Gastrocnemius medialis (tissue), 4 donors: ENCODE measurements at regions of chr17 and their contacts with region 1.

Region 1: GRCh38 chr17:48878918-48879898 is 13.4 kb upstream of the ATP5MC1 start:
- DNase-seq: peak in 1 of 2 donors; percentile 38
- ATAC-seq: peak; percentile 76 to 85
- H3K4me3 ChIP-seq: no peak overlapping the region
- H3K27ac ChIP-seq: no peak overlapping the region
- H3K4me1 ChIP-seq: peaks cover 0 to 3% of the 10 kb centered on the region in 2 donors
- H3K27me3 ChIP-seq: no peaks in the 10 kb centered on the region
- CTCF ChIP-seq: peak; percentile 77 to 91 (median 87)
- POLR2A ChIP-seq: no peak

Region 2: GRCh38 chr17:47941236-47941994 is 937.8 kb before region 1 on chr17 and contains the start of gene PNPO:
- in situ Hi-C with region 1: no loop called
- intact Hi-C with region 1: no loop called
- DNase-seq: peak; percentile 95 to 97
- ATAC-seq: peak; percentile 100
- H3K4me3 ChIP-seq: peak within 1 kb of the TSS; percentile 77 to 99 (median 88)
- H3K27ac ChIP-seq: peak within 1 kb of the TSS; percentile 88 to 98 (median 92)
- H3K4me1 ChIP-seq: peaks cover 13 to 20% of the 10 kb centered on the region in 2 donors
- H3K27me3 ChIP-seq: no peaks in the 10 kb centered on the region
- CTCF ChIP-seq: peak in 2 of 5 experiments; percentile 23 to 24
- POLR2A ChIP-seq: peak; percentile 55 to 71
- total RNA-seq, gene PNPO: 27.9 to 64.0 (median 41.5) TPM

Region 3: DNA sequence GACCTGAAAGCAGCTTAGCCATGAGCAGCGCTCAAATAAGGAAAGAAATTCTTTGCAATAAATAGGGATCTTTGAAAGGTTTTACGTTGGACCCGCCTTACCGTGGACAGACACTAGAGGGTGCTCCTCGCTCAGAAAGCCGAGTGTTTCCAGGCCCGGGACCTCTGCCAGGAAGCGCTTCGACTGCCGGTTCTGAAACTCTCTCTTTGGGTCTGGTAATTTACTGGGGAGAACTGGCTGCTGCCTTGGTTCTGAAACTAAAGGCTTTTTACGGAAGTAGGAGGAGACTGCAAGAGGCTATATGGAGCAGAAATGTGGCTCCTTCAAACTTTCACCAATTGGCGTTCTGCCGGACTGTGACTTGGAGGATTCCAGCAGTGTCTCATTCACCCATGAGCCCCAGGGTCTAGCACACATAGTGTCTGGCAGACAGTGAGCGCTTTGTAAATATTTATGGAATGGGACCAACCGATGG is 207.5 kb before region 1 on chr17:
- in situ Hi-C with region 1: loop called in 3 of 4 experiments (anchors 5 to 25 kb)
- intact Hi-C with region 1: loop called (anchors 2 kb)
- DNase-seq: peak; percentile 50 to 61
- ATAC-seq: peak; percentile 84 to 92
- H3K4me3 ChIP-seq: peak overlapping the region; percentile 35 to 57 (median 48)
- H3K27ac ChIP-seq: no peak overlapping the region
- H3K4me1 ChIP-seq: no peaks in the 10 kb centered on the region
- H3K27me3 ChIP-seq: peaks cover 0 to 25% (median 15%) of the 10 kb centered on the region in 3 donors
- CTCF ChIP-seq: peak; percentile 69 to 91 (median 81)
- POLR2A ChIP-seq: no peak

Region 4: DNA sequence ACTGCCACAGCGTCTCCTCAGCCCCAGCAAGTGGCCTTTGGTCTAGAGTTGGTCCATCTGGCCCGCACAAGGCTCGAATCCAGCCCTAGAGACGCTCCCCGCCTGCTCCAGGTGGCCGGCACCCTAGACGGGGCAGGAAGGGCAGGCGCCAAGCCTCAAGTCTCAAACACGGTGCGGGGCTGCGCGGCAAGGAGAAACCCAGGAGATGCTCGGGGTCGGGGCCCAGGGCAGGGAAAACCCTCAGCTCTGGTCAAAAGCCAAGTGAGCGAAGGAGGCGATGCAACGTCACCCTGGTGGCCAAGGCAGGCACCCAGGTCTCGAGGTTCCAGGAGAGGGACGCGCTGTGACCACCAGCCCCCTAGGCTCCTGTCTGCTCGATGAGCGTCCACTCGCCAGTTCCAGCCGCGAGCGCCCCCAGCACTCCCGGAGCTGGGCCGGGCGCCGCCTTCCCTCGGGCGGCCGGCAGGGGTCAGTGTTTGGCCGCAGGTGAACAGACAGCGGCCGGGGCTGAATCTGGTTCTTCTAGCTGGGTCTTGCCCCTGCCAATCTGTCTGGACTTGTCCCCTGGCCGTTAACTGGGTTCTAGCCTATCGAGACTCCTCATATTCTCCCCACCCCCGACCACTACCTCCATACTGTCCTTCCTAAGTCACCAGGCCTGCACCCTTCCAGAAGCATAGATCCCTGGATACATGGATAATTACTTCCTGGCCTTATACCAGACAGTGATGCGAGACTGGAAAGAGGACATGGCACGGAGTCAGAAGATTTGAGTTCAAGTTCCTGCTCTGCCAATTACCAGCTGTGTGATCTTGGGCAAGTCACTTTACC is 200.9 kb before region 1 on chr17:
- in situ Hi-C with region 1: loop called in 3 of 4 experiments (anchors 5 to 25 kb)
- intact Hi-C with region 1: no loop called
- DNase-seq: peak; percentile 7 to 29
- ATAC-seq: peak; percentile 39 to 71
- H3K4me3 ChIP-seq: no peak overlapping the region
- H3K27ac ChIP-seq: no peak overlapping the region
- H3K4me1 ChIP-seq: peaks cover 0 to 4% of the 10 kb centered on the region in 2 donors
- H3K27me3 ChIP-seq: peaks cover 5 to 20% (median 10%) of the 10 kb centered on the region in 3 donors
- CTCF ChIP-seq: peak; percentile 64 to 93 (median 84)
- POLR2A ChIP-seq: no peak

Region 5: GRCh38 chr17:48804925-48805411 is 74.2 kb before region 1 on chr17:
- in situ Hi-C with region 1: loop called (anchors 5 kb)
- intact Hi-C with region 1: loop called (anchors 1 kb)
- DNase-seq: peak in 1 of 2 donors; percentile 18
- ATAC-seq: peak; percentile 30 to 62
- H3K4me3 ChIP-seq: no peak overlapping the region
- H3K27ac ChIP-seq: no peak overlapping the region
- H3K4me1 ChIP-seq: peaks cover 0 to 5% of the 10 kb centered on the region in 2 donors
- H3K27me3 ChIP-seq: no peaks in the 10 kb centered on the region
- CTCF ChIP-seq: peak; percentile 78 to 92 (median 88)
- POLR2A ChIP-seq: no peak

Region 6: GRCh38 chr17:48816774-48817590 is 62.2 kb before region 1 on chr17 and contains the start of gene TTLL6:
- in situ Hi-C with region 1: loop called in 2 of 4 experiments (anchors 5 kb)
- intact Hi-C with region 1: loop called (anchors 1 kb)
- DNase-seq: peak; percentile 38 to 50
- ATAC-seq: peak; percentile 72 to 75
- H3K4me3 ChIP-seq: peak within 1 kb of the TSS; percentile 44 to 51 (median 49)
- H3K27ac ChIP-seq: no peak within 1 kb of the TSS
- H3K4me1 ChIP-seq: peaks cover 0 to 10% of the 10 kb centered on the region in 2 donors
- H3K27me3 ChIP-seq: peaks cover 37 to 50% (median 40%) of the 10 kb centered on the region in 3 donors
- CTCF ChIP-seq: no peak
- POLR2A ChIP-seq: no peak
- total RNA-seq, gene TTLL6: 0.10 TPM in 2 of 4 donors, not detected in the others

Region 7: DNA sequence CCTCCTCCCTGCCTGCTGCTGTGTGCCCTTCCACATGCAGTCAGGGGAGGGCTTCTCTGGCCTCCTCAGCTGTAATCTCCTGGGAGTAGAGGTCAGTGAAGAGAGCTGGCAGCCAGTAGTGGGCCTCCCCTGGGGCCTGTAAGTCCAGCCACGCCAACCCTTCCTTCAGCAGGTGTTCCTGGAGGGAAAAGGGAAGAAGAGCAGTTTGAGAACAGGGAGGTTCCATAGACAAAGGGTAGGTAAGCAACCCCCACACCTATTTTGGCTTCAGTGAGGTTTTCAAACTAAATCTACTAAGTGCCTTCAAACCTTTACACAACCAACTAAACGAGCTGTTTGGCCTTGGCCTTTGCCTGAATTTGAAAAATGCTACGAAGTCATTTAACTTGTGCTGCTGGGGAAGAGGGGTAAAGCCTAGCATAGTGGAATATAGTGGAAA is 51.2 kb after region 1 on chr17:
- in situ Hi-C with region 1: loop called in 1 of 4 experiments (anchors 10 kb)
- intact Hi-C with region 1: no loop called
- DNase-seq: no peak
- ATAC-seq: no peak
- H3K4me3 ChIP-seq: no peak overlapping the region
- H3K27ac ChIP-seq: no peak overlapping the region
- H3K4me1 ChIP-seq: no peaks in the 10 kb centered on the region
- H3K27me3 ChIP-seq: no peaks in the 10 kb centered on the region
- CTCF ChIP-seq: no peak
- POLR2A ChIP-seq: no peak

Region 8: GRCh38 chr17:48970224-48970623 is 91.0 kb after region 1 on chr17:
- in situ Hi-C with region 1: no loop called
- intact Hi-C with region 1: no loop called
- DNase-seq: no peak
- ATAC-seq: no peak
- H3K4me3 ChIP-seq: no peak overlapping the region
- H3K27ac ChIP-seq: no peak overlapping the region
- H3K4me1 ChIP-seq: no peaks in the 10 kb centered on the region
- H3K27me3 ChIP-seq: peaks cover 16 to 53% (median 25%) of the 10 kb centered on the region in 3 donors
- CTCF ChIP-seq: no peak
- POLR2A ChIP-seq: no peak

Region 9: DNA sequence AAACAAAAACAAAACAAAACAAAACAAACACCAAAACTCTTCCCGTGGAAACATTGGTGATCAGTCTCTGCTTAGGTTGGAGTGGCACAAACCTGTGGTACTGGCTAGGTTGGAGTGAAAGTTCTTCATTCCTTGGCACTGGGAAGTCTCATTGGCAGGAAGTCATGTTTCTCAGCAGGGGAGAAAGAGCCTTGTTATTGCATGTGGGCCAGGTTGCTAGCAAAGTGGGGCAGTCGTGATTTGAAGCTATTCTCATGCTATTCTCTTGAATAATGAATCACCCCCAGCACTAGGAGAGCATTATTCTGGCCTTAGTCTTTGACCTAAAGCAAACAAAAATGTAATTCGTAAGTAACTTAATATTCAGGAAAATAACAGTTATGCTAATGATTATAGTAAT is 229.1 kb after region 1 on chr17:
- in situ Hi-C with region 1: no loop called
- intact Hi-C with region 1: no loop called
- DNase-seq: no peak
- ATAC-seq: no peak
- H3K4me3 ChIP-seq: no peak overlapping the region
- H3K27ac ChIP-seq: no peak overlapping the region
- H3K4me1 ChIP-seq: no peaks in the 10 kb centered on the region
- H3K27me3 ChIP-seq: peaks cover 0 to 8% (median 2%) of the 10 kb centered on the region in 3 donors
- CTCF ChIP-seq: no peak
- POLR2A ChIP-seq: no peak